Activated naive CD4-positive, alpha-beta T cell treated with anti-CD3 and anti-CD28 coated beads for 36 hours (primary cell): ENCODE measurements at regions of chr12 and their contacts with region 1.

Region 1: DNA sequence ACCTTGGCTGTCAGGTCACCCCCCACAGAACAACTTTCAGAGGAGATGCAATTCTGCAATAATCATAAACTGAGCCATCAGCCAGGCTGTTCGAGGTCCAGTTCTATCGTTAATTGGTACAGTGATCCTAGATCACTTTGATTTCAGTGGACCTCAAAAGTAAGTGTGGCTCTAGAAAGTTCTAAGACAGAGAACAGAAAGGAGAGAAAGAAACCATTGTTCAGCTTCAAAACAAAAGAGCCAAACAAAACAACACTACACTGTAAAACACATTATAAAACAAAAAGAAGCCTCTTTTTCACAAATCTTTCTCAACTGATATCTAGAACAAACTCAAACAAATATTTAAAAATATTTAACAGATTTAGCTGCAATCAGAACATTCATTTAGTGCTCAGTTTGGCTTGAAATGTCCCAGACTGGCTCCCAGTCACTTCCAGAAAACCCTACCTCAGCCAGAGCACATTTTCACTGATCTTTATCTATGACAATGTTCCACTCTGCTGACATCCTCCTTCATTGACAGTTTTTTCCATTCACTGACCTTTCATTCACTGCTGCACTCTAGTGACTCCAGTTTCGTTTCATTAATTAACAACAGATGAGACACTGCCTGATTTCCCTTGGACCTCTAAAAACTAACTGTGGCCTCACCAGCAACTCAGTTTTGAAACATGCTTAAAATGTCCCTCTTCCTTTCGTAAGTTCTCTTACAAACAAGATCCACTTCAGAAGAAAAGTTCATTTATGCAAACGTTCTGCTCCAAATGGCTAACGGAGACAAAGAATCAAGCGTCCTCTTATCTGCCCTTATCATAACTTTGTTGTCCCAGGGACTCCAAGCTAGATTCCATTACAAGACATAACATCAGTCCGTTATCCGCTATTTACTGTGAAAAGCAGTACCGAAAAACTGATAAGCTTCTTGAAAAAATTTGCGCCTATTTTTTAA is 56.8 kb downstream of the DUSP16 start:
- DNase-seq: peak; percentile 61
- H3K4me3 Mint-ChIP-seq: peak overlapping the region; percentile 25
- H3K27ac Mint-ChIP-seq: peak overlapping the region; percentile 93
- H3K4me1 Mint-ChIP-seq: peaks cover 80% of the 10 kb centered on the region
- H3K27me3 Mint-ChIP-seq: no peaks in the 10 kb centered on the region

Region 2: GRCh38 chr12:12456637-12457036 is 49.2 kb before region 1 on chr12:
- CTCF ChIA-PET with region 1: interaction called, 4 read pairs
- intact Hi-C with region 1: loop called (anchors 1 kb)
- DNase-seq: no peak
- H3K4me3 Mint-ChIP-seq: peak overlapping the region; percentile 17
- H3K27ac Mint-ChIP-seq: peak overlapping the region; percentile 76
- H3K4me1 Mint-ChIP-seq: peaks cover 51% of the 10 kb centered on the region
- H3K27me3 Mint-ChIP-seq: no peaks in the 10 kb centered on the region

Region 3: DNA sequence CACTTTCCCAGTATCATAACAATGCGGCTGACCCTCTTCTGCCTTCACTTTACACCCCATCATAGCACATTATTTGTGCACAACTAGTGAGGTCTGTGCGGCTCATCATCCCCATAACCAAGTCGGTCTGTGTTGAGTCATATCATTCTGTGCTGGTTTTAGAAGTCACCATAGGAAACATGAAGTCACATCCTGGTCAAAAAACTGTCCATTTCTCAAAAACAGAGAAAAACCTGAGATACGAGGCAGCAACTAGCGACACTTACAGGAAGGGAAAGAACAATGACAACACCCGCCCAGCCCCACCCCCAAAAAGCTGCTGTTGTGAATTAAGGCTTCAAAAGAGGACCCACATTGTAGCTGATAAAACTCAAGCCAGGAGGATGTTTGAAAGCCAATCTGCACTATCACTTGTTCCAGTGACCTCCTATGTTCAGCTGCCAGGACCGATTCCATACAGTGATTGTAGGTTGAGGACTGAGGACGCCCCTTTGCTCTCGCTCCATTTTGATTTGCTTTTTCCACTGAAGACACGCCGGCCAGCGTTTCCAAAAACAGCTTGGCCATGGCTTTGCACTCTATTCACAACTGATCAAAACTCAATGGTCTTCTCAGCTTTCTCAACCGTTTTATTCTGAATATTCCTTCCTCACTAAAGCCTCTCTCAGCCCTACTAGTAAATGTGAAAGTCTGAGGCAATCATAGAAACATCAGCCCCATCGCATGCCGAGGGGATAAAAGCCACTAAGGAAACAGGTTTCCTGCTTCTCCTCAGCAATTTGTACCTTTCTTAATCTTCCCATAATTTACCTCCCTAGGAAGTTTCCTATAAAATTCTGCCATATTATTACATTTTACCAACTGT is 30.7 kb before region 1 on chr12:
- CTCF ChIA-PET with region 1: interaction called, 4 read pairs
- intact Hi-C with region 1: loop called (anchors 2 kb)
- DNase-seq: peak; percentile 71
- H3K4me3 Mint-ChIP-seq: peak overlapping the region; percentile 19
- H3K27ac Mint-ChIP-seq: peak overlapping the region; percentile 95
- H3K4me1 Mint-ChIP-seq: peaks cover 52% of the 10 kb centered on the region
- H3K27me3 Mint-ChIP-seq: no peaks in the 10 kb centered on the region

Region 4: GRCh38 chr12:12482959-12483358 is 22.9 kb before region 1 on chr12:
- CTCF ChIA-PET with region 1: interaction called, 5 read pairs
- intact Hi-C with region 1: loop called (anchors 1 kb)
- DNase-seq: no peak
- H3K4me3 Mint-ChIP-seq: peak overlapping the region; percentile 66
- H3K27ac Mint-ChIP-seq: peak overlapping the region; percentile 92
- H3K4me1 Mint-ChIP-seq: peaks cover 65% of the 10 kb centered on the region
- H3K27me3 Mint-ChIP-seq: no peaks in the 10 kb centered on the region

Region 5: GRCh38 chr12:12488823-12489550 is 16.8 kb before region 1 on chr12:
- CTCF ChIA-PET with region 1: interaction called, 4 read pairs
- intact Hi-C with region 1: loop called (anchors 1 kb)
- DNase-seq: no peak
- H3K4me3 Mint-ChIP-seq: no peak overlapping the region
- H3K27ac Mint-ChIP-seq: no peak overlapping the region
- H3K4me1 Mint-ChIP-seq: peaks cover 21% of the 10 kb centered on the region
- H3K27me3 Mint-ChIP-seq: no peaks in the 10 kb centered on the region

Region 6: GRCh38 chr12:12582895-12583303 is 77.1 kb after region 1 on chr12:
- CTCF ChIA-PET with region 1: no interaction called
- intact Hi-C with region 1: loop called (anchors 1 kb)
- DNase-seq: peak; percentile 81
- H3K4me3 Mint-ChIP-seq: peak overlapping the region; percentile 26
- H3K27ac Mint-ChIP-seq: peak overlapping the region; percentile 89
- H3K4me1 Mint-ChIP-seq: peaks cover 44% of the 10 kb centered on the region
- H3K27me3 Mint-ChIP-seq: peaks cover under 1% of the 10 kb centered on the region

Region 7: DNA sequence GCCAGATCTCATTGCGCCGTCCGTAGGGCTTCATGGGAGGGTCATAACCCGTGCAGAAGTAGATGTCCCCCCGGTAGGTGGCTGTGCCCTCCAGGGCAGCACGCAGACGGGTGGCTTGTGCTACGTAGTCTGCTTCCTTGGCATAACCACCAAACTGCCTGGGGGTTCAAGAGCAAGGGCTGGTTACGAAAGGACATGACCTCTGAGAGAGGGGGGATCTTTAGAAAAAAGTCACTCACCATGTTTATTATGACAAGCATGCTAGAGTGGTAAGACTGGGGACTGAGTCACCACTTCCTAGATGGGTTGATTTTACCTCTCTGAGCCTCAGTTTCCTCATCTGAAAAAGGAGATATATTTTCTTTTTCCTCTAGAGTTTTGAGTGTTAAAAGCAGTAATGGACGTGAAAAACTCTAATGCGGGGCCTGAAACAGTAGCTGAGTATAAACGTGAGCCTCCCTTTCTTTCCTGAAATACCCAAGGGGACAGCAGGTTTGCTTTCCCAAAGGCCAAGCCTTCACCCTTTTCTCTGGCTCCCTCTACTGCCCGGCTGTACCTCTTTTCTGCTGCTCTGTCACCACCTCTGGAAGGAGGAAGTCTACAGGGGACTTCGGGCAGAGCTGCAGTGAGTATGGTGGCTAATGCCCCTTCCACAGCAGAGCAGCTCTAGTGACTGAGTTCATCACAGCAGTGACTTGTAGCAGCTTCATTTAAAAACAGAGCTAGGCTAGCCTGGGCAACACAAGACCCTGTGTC is 469.7 kb after region 1 on chr12:
- CTCF ChIA-PET with region 1: no interaction called
- intact Hi-C with region 1: no loop called
- DNase-seq: peak; percentile 49
- H3K4me3 Mint-ChIP-seq: no peak overlapping the region
- H3K27ac Mint-ChIP-seq: no peak overlapping the region
- H3K4me1 Mint-ChIP-seq: no peaks in the 10 kb centered on the region
- H3K27me3 Mint-ChIP-seq: no peaks in the 10 kb centered on the region